Cardiac septum (tissue), 1 donor: ENCODE measurements at regions of chr11 and their contacts with region 1.

Region 1: DNA sequence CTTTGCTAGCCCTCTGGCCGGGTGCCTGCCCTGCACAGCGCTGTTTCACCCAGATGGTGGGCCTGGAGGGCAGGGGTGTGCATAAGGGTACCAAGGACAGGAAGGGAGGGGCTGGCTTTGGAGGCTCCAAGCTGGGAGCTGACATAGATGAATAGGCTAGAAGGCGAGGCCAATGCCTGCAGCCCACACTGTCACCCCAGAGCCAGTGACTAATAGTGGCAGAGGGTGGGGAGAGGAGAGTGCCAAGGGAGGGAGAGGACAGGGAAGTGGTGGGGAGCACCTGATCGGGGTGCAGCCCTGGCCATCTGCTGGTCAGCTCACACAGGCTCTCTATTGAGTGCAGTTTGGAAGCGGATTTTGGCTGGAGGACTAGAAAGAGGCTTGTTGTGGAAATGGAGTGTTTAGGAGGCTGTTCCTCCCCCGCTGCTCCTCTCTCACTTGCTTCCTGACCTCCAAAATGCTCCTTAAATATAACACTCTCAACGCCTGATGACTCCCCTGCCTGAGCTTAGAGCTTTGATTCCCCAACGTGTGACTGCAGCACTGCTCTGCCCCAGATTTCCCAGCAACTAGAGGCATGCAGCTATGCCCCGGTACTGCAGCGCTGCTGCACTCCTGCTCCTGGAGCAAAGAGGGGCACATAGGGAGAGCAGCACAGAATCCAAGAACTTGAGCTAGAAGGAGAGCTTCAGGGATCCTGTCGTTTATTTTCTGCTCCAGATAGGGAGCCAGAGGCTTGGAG is 89.2 kb downstream of the GRAMD1B start:
- DNase-seq: no peak

Region 2: GRCh38 chr11:123301696-123302400 is 217.4 kb before region 1 on chr11:
- intact Hi-C with region 1: no loop called
- DNase-seq: peak; percentile 87

Region 3: DNA sequence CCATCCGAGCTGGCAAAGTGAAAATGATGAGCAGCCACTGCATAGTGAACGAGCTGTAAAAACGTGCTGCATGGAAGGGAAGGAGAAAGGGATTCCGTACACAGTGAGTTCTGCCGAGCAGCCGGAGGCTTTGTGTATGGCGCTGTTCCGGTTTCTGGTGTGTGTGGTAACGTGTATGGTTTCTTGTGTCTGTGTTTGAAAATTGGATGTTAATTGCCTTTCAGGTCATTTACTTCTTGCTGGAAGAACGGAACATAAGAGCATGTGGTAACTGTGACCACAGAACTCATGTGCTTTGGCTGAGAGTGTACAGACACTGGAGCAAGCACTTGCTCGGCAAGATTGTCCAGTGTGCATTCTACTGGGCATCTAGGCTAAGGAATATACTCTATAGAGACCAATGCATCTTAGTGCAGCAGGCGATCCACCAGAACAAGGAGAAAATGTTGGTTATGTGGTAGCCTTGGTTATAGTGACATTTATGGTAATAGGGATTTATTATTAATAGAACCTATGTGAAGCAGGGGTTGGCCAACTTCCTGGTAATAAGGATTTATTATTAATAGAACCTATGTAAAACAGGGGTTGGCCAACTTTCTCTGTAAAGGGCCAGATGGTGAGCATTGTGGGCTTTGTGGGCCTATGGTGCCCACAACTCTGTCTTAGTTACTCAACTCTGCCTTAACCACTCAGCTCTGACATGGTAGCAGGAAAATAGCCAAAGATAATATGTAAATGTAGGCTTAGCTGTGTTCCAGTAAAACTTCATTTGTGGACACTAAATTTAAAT is 40.0 kb before region 1 on chr11:
- intact Hi-C with region 1: no loop called
- DNase-seq: no peak

Region 4: DNA sequence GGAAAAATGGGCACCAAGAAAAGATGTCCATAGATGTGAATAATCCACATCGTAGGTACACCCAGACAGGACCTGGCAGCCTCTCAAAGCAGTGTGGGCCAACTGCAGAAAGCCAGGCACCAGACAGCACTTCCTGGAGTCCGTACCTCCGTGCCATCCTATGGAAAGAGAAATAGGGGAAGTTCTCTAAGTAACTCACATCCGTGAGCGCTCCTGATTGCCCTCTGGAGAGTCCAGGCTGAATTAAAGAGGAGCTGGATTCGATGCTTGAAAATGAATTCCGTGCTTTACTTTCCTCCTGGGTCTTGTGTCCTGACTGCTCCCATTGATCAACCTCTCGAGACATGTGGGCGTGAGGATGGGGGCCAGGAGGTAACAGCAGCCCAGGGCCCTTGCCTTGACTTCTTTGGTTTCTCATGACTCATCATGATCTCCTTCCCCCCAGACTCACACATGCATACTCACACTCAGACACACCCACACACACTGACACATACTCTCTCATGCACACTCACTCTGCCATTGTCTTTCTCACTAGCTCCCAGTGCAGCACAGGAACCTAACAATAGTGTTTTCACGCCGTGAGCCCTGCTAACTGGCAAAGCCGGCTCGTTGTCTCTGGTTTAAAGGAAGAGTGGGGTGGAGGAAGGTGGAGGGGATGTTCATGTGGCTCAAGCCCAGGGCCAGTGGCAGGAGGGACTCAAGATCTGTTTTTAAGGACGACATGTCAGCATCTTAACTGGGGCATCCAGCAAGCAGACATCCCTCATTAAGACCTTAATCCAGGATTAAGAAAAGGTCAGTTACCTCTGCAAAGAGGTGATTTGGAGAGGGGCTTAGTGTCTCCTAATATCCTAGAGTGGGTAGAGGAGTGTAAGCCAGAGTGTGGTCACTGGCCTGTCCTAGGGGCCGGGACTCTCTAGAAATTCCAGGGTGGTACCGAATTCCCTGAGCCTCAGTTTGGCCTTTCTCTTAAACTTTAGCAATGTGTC is 31.0 kb after region 1 on chr11:
- intact Hi-C with region 1: loop called (anchors 5 kb)
- DNase-seq: no peak